ENCODE measurements at regions of chr4 and their contacts with region 1.

Region 1: DNA sequence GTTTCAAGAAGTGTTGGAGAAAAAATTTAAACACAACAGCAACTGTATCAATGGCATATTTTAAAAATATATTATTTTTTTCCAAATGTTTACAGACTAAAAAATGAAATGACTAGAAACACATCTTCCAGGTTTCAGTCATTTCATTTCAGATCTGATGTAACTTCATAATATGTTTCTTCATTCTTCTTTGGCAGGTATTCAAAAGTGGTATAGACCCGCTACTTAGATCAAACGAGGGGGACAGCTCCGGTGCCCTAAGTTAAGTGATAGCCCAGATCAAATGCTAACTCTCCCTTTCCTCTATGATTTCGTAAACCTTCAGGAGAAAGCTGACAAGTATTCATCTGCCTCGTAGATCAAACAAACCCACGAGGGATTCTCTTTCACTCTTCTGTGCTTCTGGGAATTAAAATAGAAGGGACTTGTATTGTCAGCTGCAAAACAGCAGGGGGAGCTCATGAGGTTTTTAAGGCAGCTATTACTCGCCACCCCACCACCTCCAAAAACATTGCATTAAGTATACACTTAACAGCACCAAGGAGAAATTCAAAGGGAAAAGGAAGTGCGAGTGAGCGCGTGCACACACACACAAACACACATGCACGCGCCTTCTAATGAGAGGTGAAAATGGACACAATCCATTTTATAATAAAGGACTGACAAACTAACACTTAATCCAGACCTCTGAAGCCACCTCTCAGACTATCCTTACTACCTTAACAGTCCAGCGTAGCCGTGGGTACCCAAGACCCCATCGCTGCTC is 21.4 kb downstream of the HELT start:
- DNase-seq: peak in 1 of 3 donors; percentile 58
- ATAC-seq: peak; percentile 68 to 85
- H3K4me3 ChIP-seq: peak overlapping the region; percentile 29
- H3K27ac ChIP-seq: no peak overlapping the region
- H3K4me1 ChIP-seq: no peaks in the 10 kb centered on the region
- H3K27me3 ChIP-seq: no peaks in the 10 kb centered on the region

Region 2: GRCh38 chr4:184782731-184783373 is 256.8 kb before region 1 on chr4:
- intact Hi-C with region 1: no loop called
- DNase-seq: no peak
- ATAC-seq: peak in 1 of 2 donors; percentile 16
- H3K4me3 ChIP-seq: no peak overlapping the region
- H3K27ac ChIP-seq: no peak overlapping the region
- H3K4me1 ChIP-seq: no peaks in the 10 kb centered on the region
- H3K27me3 ChIP-seq: no peaks in the 10 kb centered on the region

Region 3: DNA sequence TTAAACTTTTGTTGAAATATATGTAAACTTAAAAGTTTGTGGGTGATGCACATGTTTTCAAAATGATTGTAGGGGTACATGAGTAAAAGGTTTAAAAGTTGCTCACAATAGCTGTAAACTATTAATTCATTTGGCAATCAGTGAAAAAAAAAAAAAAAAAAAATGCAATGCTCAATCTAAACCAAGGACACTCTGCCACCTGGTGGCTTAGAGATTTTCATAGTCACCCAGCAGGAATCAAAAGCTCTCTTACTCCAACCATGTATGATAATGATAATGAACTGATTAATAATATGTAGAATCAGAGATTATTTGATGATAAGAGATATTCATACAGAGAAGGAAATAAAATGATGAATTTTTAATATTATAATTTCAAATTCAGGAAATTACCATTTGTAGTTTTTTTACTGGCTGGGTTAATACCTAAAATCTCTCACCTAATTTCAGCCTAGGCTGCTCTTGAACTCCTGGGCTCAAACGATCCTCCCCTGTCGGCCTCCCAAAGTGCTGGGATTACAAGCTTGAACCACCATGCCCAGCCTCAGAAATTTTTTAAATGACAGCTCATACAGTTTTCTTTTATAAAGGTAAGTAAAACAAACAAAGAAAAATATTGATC is 56.5 kb after region 1 on chr4:
- intact Hi-C with region 1: loop called (anchors 5 to 10 kb)
- DNase-seq: no peak
- ATAC-seq: no peak
- H3K4me3 ChIP-seq: no peak overlapping the region
- H3K27ac ChIP-seq: no peak overlapping the region
- H3K4me1 ChIP-seq: no peaks in the 10 kb centered on the region
- H3K27me3 ChIP-seq: no peaks in the 10 kb centered on the region

Region 4: GRCh38 chr4:185134307-185134869 is 94.7 kb after region 1 on chr4:
- intact Hi-C with region 1: loop called (anchors 2 to 10 kb)
- DNase-seq: no peak
- ATAC-seq: peak; percentile 52 to 60
- H3K4me3 ChIP-seq: no peak overlapping the region
- H3K27ac ChIP-seq: no peak overlapping the region
- H3K4me1 ChIP-seq: peaks cover 3% of the 10 kb centered on the region
- H3K27me3 ChIP-seq: no peaks in the 10 kb centered on the region

Region 5: GRCh38 chr4:185183619-185184281 is 144.1 kb after region 1 on chr4:
- intact Hi-C with region 1: loop called in 1 of 4 experiments (anchors 5 kb)
- DNase-seq: peak in 2 of 3 donors; percentile 76 to 87
- ATAC-seq: peak; percentile 66 to 78
- H3K4me3 ChIP-seq: no peak overlapping the region
- H3K27ac ChIP-seq: no peak overlapping the region
- H3K4me1 ChIP-seq: peaks cover 1% of the 10 kb centered on the region
- H3K27me3 ChIP-seq: no peaks in the 10 kb centered on the region

Measured in right cardiac atrium (tissue), 5 donors.